ENCODE measurements at regions of chr5 and their contacts with region 1.

Region 1: DNA sequence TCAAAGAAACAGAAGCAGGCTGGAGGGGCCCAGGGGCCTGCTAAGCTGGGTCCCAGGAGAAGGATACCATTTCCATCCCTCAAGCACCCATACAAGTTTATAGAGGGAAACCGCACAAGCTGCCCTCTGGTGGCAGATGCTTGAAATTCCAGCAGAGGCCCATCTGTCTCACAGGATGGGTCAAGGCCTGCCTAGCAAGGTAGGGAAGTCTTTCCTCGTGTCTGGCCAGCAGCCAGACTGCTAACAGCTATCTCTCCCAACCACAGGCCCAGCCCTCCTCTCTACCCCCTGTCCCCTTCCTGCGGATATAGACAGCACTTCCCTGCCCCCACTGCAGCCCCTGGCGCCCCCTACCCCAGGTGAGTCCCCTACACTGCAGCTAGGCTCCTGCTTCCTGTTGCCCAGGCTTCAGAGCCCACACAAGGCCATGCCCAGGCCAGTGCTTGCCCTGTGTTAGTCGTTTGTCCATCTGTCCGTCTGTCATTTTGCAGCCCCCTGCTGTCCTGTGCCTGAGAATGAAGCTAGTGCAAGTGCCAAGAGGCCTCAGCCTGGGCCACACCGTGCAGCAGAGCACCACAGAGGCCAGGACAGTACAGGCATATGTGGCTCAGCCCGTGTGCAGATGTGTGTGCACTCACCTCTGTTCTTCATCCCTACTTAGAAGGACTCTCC is 26.2 kb downstream of the TCF7 start:
- DNase-seq: peak; percentile 93
- H3K27ac ChIP-seq: peak overlapping the region; percentile 65
- CTCF ChIP-seq: peak; percentile 93

Region 2: GRCh38 chr5:134101686-134102439 is 38.8 kb before region 1 on chr5:
- CTCF ChIA-PET with region 1: interaction called, 55 read pairs
- POLR2A ChIA-PET with region 1: no interaction called
- DNase-seq: peak; percentile 83
- H3K27ac ChIP-seq: no peak overlapping the region
- CTCF ChIP-seq: peak; percentile 96

Region 3: GRCh38 chr5:134119720-134120119 is 20.9 kb before region 1 on chr5:
- CTCF ChIA-PET with region 1: interaction called, 39 read pairs
- POLR2A ChIA-PET with region 1: interaction called, 4 read pairs
- DNase-seq: no peak
- H3K27ac ChIP-seq: no peak overlapping the region
- CTCF ChIP-seq: no peak

Region 4: GRCh38 chr5:134125039-134126015 is 15.3 kb before region 1 on chr5:
- CTCF ChIA-PET with region 1: interaction called, 39 read pairs
- POLR2A ChIA-PET with region 1: no interaction called
- DNase-seq: peak; percentile 86
- H3K27ac ChIP-seq: peak overlapping the region; percentile 95
- CTCF ChIP-seq: no peak

Region 5: DNA sequence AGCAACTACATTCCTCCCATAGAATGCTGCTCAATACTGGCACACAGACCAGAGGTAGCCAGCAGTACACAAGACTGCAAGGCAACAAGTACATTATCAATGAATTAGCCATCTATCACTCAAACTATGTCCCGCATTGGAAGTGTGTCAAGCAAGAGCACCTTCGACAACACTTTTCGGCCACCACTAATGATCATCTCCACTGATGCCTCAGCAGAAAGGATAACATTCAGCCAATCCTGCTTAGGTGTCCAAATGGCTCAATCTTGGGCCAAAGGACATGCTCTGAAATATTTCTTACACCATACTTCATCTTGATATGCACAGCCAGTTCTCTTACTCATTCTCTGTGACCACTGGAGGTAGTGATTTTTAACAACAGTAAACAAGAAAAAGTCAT is 11.1 kb after region 1 on chr5:
- CTCF ChIA-PET with region 1: interaction called, 10 read pairs
- POLR2A ChIA-PET with region 1: interaction called, 3 read pairs
- DNase-seq: no peak
- H3K27ac ChIP-seq: no peak overlapping the region
- CTCF ChIP-seq: no peak

Measured in RWPE1 (cell line).